Heart right ventricle (tissue), 16 donors: ENCODE measurements at regions of chr1 and their contacts with region 1.

Region 1: GRCh38 chr1:236581528-236581927 is 22.8 kb downstream of the HEATR1 start:
- DNase-seq: no peak
- ATAC-seq: peak in 5 of 8 donors; percentile 39 to 83 (median 79)
- H3K4me3 ChIP-seq: no peak overlapping the region
- H3K27ac ChIP-seq: peak overlapping the region in 2 of 10 donors; percentile 4 to 33
- H3K4me1 ChIP-seq: no peaks in the 10 kb centered on the region
- H3K27me3 ChIP-seq: no peaks in the 10 kb centered on the region
- CTCF ChIP-seq: no peak

Region 2: DNA sequence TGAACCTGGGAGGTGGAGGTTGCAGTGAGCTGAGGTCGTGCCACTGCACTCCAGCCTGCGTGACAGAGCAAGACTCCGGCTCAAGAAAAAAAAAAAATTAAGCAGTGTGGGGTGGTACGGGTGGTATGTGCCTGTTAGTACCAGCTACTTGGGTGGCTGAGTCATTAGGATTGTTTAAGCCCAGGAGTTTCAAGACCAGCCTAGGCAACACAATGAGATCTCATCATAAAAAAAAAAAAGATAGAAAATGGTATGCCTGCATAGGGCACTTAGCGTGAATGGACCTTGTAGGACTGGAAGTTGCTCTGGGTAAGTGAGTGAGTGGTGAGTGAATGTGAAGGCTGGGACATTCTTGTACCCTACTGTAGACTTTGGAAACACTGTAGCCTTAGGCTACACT is 1177.3 kb before region 1 on chr1:
- intact Hi-C with region 1: no loop called
- DNase-seq: no peak
- ATAC-seq: no peak
- H3K4me3 ChIP-seq: no peak overlapping the region
- H3K27ac ChIP-seq: no peak overlapping the region
- H3K4me1 ChIP-seq: peaks cover 0 to 13% (median 5%) of the 10 kb centered on the region in 9 donors
- H3K27me3 ChIP-seq: no peaks in the 10 kb centered on the region
- CTCF ChIP-seq: no peak

Region 3: GRCh38 chr1:236545621-236546169 is 35.8 kb before region 1 on chr1:
- intact Hi-C with region 1: loop called in 1 of 10 experiments (anchors 5 kb)
- DNase-seq: no peak
- ATAC-seq: no peak
- H3K4me3 ChIP-seq: no peak overlapping the region
- H3K27ac ChIP-seq: no peak overlapping the region
- H3K4me1 ChIP-seq: no peaks in the 10 kb centered on the region
- H3K27me3 ChIP-seq: no peaks in the 10 kb centered on the region
- CTCF ChIP-seq: no peak